Pancreas (tissue), 10 donors: ENCODE measurements at regions of chr7 and their contacts with region 1.

Region 1: GRCh38 chr7:91089382-91089963 is 174.8 kb upstream of the FZD1 start:
- DNase-seq: peak in 1 of 6 donors; percentile 9
- ATAC-seq: peak; percentile 60 to 92 (median 86)
- H3K4me3 ChIP-seq: peak overlapping the region in 2 of 4 donors; percentile 18 to 23
- H3K27ac ChIP-seq: no peak overlapping the region
- H3K4me1 ChIP-seq: no peaks in the 10 kb centered on the region
- H3K27me3 ChIP-seq: no peaks in the 10 kb centered on the region
- CTCF ChIP-seq: peak; percentile 48 to 66 (median 60)

Region 2: DNA sequence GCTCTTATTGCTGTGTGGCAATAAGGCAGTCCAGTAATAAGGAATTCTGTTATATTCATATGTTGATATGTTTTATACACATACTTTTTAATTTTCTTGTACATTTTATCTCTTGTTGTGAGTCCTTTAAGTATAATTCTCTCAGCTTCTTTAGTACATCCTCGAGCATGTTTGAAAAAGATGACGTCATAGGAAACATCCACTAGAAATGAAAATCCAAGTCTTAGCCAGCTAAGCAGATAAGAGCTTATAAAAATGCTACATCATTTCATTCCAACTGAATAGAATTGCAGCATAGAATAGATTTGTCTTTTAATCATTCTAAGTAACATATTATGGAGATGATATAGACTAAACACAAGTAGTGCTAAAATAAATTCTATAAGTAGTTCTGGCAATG is 108.9 kb before region 1 on chr7:
- intact Hi-C with region 1: no loop called
- DNase-seq: no peak
- ATAC-seq: no peak
- H3K4me3 ChIP-seq: no peak overlapping the region
- H3K27ac ChIP-seq: no peak overlapping the region
- H3K4me1 ChIP-seq: no peaks in the 10 kb centered on the region
- H3K27me3 ChIP-seq: no peaks in the 10 kb centered on the region
- CTCF ChIP-seq: no peak

Region 3: DNA sequence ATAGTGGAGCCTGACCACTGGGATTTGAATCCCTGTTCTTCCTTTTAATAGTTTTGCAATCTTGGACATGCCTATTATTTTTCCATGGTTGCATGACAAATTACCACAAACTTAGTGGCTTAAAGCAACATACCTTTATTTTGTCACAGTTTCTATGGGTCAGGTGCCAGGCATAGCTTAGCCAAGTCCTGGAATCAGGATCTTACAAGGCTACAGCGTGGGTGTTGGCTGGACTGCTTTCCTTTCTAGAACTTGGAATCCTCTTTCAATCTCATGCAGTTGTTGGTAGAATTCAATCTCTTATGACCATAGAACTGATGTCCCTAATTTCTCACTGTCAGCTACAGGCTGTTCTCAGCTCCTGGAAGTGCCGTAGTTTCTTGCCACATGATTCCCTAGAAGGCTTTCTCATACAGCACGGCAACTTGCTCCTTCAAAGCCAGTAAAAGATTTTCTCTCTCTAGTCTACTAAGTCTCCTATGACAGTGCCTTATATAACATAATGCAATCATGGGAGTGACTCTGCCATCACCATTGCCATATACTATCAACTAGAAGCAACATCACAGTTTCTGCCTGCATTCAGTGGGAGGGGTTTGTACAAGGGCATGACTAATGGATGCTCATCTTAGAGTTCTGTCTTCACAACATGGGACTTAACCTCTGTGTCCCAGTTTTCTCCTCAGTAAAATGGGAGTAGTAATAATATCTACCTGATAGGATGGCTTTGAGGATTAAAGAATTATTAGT is 68.7 kb before region 1 on chr7:
- intact Hi-C with region 1: no loop called
- DNase-seq: no peak
- ATAC-seq: no peak
- H3K4me3 ChIP-seq: no peak overlapping the region
- H3K27ac ChIP-seq: no peak overlapping the region
- H3K4me1 ChIP-seq: no peaks in the 10 kb centered on the region
- H3K27me3 ChIP-seq: no peaks in the 10 kb centered on the region
- CTCF ChIP-seq: no peak

Region 4: DNA sequence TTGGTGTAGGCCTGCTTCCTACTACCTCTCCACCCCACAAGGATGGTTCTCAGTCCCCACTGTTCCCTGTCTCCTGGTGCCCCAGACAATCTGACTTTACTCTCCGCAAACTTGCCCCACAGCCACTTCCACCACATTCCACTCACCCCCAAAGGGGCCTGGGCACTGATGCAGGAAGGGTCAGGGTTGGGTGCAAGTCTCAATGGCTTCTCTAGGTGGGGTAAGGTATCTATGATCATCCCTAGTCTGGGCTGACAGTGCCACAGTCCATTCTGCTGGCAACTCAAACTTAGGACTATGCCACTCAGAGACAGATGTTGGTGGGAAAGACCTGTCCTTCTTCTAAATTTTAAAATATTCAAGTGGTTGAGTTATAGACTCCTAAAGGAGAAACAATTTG is 551.3 kb after region 1 on chr7:
- intact Hi-C with region 1: loop called in 1 of 3 experiments (anchors 10 kb)
- DNase-seq: no peak
- ATAC-seq: no peak
- H3K4me3 ChIP-seq: no peak overlapping the region
- H3K27ac ChIP-seq: no peak overlapping the region
- H3K4me1 ChIP-seq: no peaks in the 10 kb centered on the region
- H3K27me3 ChIP-seq: no peaks in the 10 kb centered on the region
- CTCF ChIP-seq: no peak